Lower lobe of right lung (tissue), 2 donors: ENCODE measurements at regions of chr12 and their contacts with region 1.

Region 1: GRCh38 chr12:9636851-9637206 is 29.1 kb upstream of the KLRB1 start:
- DNase-seq: no peak
- ATAC-seq: no peak
- H3K4me3 ChIP-seq: no peak overlapping the region
- H3K27ac ChIP-seq: no peak overlapping the region
- H3K4me1 ChIP-seq: peaks cover 19% of the 10 kb centered on the region
- H3K27me3 ChIP-seq: no peaks in the 10 kb centered on the region
- CTCF ChIP-seq: no peak

Region 2: DNA sequence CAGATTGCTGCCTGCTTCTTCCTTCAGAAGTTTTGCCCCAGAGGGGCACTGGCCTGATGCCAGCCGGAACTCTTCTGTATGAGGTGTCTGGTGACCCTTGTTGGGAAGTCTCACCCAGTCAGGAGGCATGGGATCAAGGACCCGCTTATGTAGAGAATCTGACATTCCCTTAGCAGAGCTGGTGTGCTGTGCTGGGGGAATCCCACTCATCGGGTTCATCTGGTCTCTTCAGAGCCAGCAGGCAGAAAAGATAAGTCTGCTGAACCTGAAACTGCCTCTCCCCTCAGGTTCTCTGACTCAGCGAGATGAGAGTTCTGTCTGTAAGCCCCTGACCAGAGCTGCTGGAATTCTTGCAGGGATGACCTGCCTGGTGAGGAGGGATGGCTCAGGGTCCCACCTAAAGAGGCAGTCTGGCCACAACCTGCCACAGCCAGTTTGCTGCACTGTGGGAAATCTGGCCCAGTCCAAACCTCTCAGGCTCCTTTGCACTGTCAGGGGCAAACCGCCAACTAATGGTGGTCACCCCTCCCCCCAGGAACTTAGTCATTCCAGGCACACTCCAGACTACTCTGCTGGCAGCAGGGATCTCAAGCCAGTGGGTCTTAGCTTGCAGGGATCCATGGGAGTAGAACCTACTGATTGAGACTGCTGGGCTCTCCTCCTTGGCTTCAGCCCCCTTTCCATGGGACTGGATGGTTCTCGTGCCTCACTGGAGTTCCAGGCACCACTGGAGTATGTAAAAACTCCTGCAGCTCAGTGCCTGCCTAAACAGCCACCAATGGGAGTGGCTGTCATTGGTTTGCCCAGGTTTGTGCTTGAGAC is 36.8 kb after region 1 on chr12:
- intact Hi-C with region 1: no loop called
- DNase-seq: peak; percentile 60
- ATAC-seq: peak; percentile 81 to 90
- H3K4me3 ChIP-seq: peak overlapping the region; percentile 9
- H3K27ac ChIP-seq: peak overlapping the region; percentile 13
- H3K4me1 ChIP-seq: peaks cover 14% of the 10 kb centered on the region
- H3K27me3 ChIP-seq: no peaks in the 10 kb centered on the region
- CTCF ChIP-seq: no peak

Region 3: GRCh38 chr12:9707864-9708808 is 71.3 kb after region 1 on chr12:
- intact Hi-C with region 1: loop called (anchors 5 kb)
- DNase-seq: peak; percentile 59
- ATAC-seq: peak; percentile 85 to 89
- H3K4me3 ChIP-seq: no peak overlapping the region
- H3K27ac ChIP-seq: no peak overlapping the region
- H3K4me1 ChIP-seq: no peaks in the 10 kb centered on the region
- H3K27me3 ChIP-seq: no peaks in the 10 kb centered on the region
- CTCF ChIP-seq: peak; percentile 84

Region 4: DNA sequence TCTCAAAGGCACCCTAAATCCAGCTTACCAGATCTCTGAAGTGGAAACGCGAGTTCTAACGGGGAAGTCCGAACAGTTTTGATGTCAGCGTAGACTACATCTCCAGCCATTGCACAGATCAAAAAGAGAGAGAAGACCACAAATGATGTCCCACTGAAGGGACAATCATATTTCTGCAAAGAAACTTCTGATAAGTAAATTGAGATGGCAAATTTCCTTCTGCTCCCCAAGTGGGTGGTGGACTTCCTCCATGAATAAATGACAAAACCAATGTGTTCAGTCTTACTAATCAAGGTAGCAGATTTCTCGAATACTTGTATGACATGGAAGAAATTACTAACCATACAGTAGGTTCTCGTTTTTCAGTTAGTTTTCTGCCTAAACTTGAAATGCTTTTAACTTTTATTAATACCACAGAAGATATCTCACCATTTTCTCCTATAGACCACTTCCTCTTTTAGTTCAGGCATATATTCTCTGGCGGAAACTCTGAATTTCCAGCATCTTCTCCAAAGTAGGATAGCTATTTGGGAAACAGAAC is 96.2 kb after region 1 on chr12 and contains the start of gene CLECL1:
- intact Hi-C with region 1: no loop called
- DNase-seq: no peak
- ATAC-seq: no peak
- H3K4me3 ChIP-seq: peak within 1 kb of the TSS; percentile 27
- H3K27ac ChIP-seq: peak within 1 kb of the TSS; percentile 70
- H3K4me1 ChIP-seq: peaks cover 7% of the 10 kb centered on the region
- H3K27me3 ChIP-seq: no peaks in the 10 kb centered on the region
- CTCF ChIP-seq: no peak
- total RNA-seq, gene CLECL1: 1.7 TPM

Region 5: GRCh38 chr12:9883175-9883574 is 246.3 kb after region 1 on chr12:
- intact Hi-C with region 1: no loop called
- DNase-seq: no peak
- ATAC-seq: no peak
- H3K4me3 ChIP-seq: no peak overlapping the region
- H3K27ac ChIP-seq: no peak overlapping the region
- H3K4me1 ChIP-seq: no peaks in the 10 kb centered on the region
- H3K27me3 ChIP-seq: no peaks in the 10 kb centered on the region
- CTCF ChIP-seq: no peak

Region 6: DNA sequence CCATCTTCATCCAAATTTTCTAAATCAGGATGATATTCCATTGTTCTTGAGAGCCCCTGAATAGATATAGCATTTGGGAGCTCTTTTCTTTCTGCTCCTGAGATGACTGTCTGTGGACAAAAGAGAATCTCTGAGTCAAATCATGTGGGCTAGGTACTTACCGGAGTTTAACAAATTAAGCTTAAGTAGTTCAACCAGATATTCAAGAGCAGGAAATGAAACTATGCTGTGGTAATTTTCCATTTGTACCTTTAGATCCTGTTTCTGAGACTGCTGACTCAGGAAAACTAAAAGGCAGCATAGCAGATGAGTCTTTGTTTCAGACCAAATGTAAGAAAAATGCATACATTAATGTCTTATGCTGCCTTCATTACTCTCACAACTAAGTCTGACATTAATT is 493.2 kb after region 1 on chr12 and contains the start of gene CLEC7A:
- intact Hi-C with region 1: no loop called
- DNase-seq: no peak
- ATAC-seq: peak; percentile 66 to 81
- H3K4me3 ChIP-seq: peak within 1 kb of the TSS; percentile 32
- H3K27ac ChIP-seq: peak within 1 kb of the TSS; percentile 80
- H3K4me1 ChIP-seq: no peaks in the 10 kb centered on the region
- H3K27me3 ChIP-seq: no peaks in the 10 kb centered on the region
- CTCF ChIP-seq: no peak
- total RNA-seq, gene CLEC7A: 79.5 TPM